Mammary epithelial cell (primary cell): ENCODE measurements at regions of chr3 and their contacts with region 1.

Region 1: DNA sequence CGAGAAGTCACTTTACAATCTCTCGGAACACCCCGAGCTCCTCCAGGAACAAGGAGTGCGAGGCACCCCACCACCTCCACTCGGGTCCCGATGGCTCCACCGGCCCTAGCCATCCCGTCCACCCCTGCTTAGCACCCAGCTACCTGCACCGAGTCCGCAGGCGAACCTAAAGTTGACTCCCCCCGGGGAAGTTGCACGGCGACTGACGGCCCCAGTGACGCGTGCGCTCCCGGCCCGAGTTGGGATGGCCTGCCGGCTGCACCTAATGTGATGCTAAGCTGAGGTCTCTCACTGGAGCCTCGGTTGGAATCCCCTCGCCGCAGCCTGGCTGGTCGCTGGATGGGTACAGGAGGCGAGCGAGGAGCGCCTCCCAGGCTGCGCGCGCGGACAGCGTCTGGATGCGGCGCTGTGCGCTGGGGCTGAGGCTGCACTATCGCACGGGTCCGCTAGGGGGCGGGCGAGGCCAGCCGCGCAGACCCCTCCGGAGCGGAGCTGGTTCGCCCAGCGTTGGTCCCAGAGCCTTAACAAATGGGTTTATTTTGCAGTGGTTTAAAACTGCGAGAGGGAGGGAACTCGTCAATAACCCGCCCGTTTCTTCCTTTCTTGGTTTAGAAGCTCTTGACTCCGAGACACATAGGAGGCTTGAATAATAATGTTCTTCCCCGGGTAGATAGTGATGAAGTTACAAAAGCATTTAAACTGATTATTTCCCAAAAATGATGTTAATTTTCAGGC is at the start of gene OXTR:
- DNase-seq: peak; percentile 70
- H3K4me3 ChIP-seq: peak within 1 kb of the TSS; percentile 2 to 53 (median 45)
- H3K27ac ChIP-seq: no peak within 1 kb of the TSS
- H3K4me1 ChIP-seq: peaks cover 22% of the 10 kb centered on the region
- H3K27me3 ChIP-seq: no peaks in the 10 kb centered on the region
- CTCF ChIP-seq: peak; percentile 80 to 100
- total RNA-seq, gene OXTR: 1.3 to 8.0 TPM

Region 2: GRCh38 chr3:8441969-8442559 is 327.2 kb before region 1 on chr3:
- CTCF ChIA-PET with region 1: no interaction called
- dilution Hi-C with region 1: no loop called
- in situ Hi-C with region 1: no loop called
- intact Hi-C with region 1: loop called (anchors 5 kb)
- DNase-seq: peak; percentile 30
- H3K4me3 ChIP-seq: no peak overlapping the region
- H3K27ac ChIP-seq: no peak overlapping the region
- H3K4me1 ChIP-seq: peaks cover 5% of the 10 kb centered on the region
- H3K27me3 ChIP-seq: no peaks in the 10 kb centered on the region
- CTCF ChIP-seq: peak; percentile 63 to 75

Region 3: DNA sequence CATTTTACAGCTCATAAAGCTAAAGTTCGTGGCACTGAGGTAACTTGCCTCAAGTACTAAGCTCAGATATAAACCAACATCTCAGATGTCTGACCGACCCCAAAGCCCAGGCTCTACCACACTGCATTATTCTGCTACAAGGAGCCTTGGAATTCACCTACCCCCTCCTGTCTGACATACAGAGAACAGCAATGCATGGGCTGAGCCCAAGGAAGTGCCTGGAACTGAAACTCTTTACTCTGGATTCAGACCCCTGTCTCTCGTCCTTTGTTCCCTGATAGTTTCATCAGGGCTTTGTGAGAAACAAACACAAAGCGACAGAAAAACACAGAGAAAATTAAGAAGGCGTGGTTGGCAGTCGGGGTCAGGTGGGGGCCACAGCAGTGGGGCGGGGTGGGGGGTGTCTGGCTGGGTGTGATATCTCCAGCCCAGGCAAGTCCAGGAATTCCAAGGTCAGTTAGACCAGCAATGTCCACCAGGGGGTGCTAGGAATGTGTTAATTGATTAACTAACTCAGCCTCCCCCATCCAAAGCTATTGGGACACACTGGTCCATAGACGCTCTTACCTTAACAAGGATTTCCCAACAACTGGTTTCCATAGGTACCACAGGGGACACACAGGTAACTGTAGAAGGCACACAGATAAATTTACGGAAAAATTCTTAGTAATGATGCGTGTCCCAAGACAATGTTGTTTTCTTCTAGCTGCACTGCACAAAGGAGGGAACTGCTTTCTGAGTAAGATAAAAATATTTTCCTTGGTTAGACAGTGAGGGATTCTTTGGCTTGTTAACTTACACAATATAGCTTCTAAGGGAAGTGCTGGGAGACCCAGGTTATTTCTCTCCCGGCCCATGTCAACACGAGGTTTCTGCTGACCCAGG is 105.8 kb before region 1 on chr3:
- CTCF ChIA-PET with region 1: no interaction called
- dilution Hi-C with region 1: no loop called
- in situ Hi-C with region 1: no loop called
- intact Hi-C with region 1: loop called (anchors 1 kb)
- DNase-seq: peak; percentile 65
- H3K4me3 ChIP-seq: no peak overlapping the region
- H3K27ac ChIP-seq: no peak overlapping the region
- H3K4me1 ChIP-seq: no peaks in the 10 kb centered on the region
- H3K27me3 ChIP-seq: no peaks in the 10 kb centered on the region
- CTCF ChIP-seq: peak; percentile 52 to 71

Region 4: GRCh38 chr3:8678751-8679150 is 90.5 kb before region 1 on chr3:
- CTCF ChIA-PET with region 1: no interaction called
- dilution Hi-C with region 1: no loop called
- in situ Hi-C with region 1: no loop called
- intact Hi-C with region 1: loop called (anchors 1 kb)
- DNase-seq: no peak
- H3K4me3 ChIP-seq: no peak overlapping the region
- H3K27ac ChIP-seq: no peak overlapping the region
- H3K4me1 ChIP-seq: peaks cover 15% of the 10 kb centered on the region
- H3K27me3 ChIP-seq: no peaks in the 10 kb centered on the region
- CTCF ChIP-seq: no peak

Region 5: GRCh38 chr3:8899986-8900385 is 130.7 kb after region 1 on chr3:
- CTCF ChIA-PET with region 1: interaction called, 3 read pairs
- dilution Hi-C with region 1: no loop called
- in situ Hi-C with region 1: no loop called
- intact Hi-C with region 1: loop called (anchors 1 kb)
- DNase-seq: no peak
- H3K4me3 ChIP-seq: no peak overlapping the region
- H3K27ac ChIP-seq: no peak overlapping the region
- H3K4me1 ChIP-seq: no peaks in the 10 kb centered on the region
- H3K27me3 ChIP-seq: no peaks in the 10 kb centered on the region
- CTCF ChIP-seq: no peak

Region 6: DNA sequence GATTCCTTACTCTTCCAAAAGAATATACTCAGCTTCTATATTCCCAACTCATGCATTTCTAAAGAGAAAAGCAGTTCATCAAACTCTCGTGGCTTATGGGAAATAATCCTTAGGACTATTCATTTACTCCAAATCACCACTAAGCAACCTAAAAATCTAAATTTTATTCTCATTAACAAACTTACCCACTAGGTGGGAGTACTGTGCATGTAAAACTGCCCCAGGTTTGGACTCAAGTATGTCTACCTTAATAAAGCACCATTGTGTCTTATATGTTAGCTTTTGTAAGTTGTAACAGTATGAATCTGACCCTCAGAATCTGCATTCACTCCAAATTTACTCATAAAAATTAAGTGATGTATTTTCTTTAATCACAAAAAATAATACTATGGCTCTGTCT is 168.8 kb after region 1 on chr3:
- CTCF ChIA-PET with region 1: no interaction called
- dilution Hi-C with region 1: no loop called
- in situ Hi-C with region 1: no loop called
- intact Hi-C with region 1: loop called (anchors 2 kb)
- DNase-seq: peak; percentile 11
- H3K4me3 ChIP-seq: no peak overlapping the region
- H3K27ac ChIP-seq: peak overlapping the region; percentile 75
- H3K4me1 ChIP-seq: peaks cover 18% of the 10 kb centered on the region
- H3K27me3 ChIP-seq: no peaks in the 10 kb centered on the region
- CTCF ChIP-seq: peak; percentile 43 to 53

Region 7: GRCh38 chr3:8963137-8963869 is 194.0 kb after region 1 on chr3 and contains the start of gene RAD18:
- CTCF ChIA-PET with region 1: no interaction called
- dilution Hi-C with region 1: no loop called
- in situ Hi-C with region 1: no loop called
- intact Hi-C with region 1: loop called (anchors 2 kb)
- DNase-seq: peak; percentile 86
- H3K4me3 ChIP-seq: peak within 1 kb of the TSS; percentile 67 to 98 (median 89)
- H3K27ac ChIP-seq: peak within 1 kb of the TSS; percentile 87
- H3K4me1 ChIP-seq: peaks cover 38% of the 10 kb centered on the region
- H3K27me3 ChIP-seq: no peaks in the 10 kb centered on the region
- CTCF ChIP-seq: no peak
- total RNA-seq, gene RAD18: 11.5 to 27.0 TPM